HCT116 (cell line): ENCODE measurements at regions of chr7 and their contacts with region 1.

Region 1: GRCh38 chr7:87312215-87312865 is 33.1 kb upstream of the CROT start:
- DNase-seq: peak; percentile 29
- ATAC-seq: peak; percentile 86
- H3K4me3 ChIP-seq: no peak overlapping the region
- H3K27ac ChIP-seq: no peak overlapping the region
- H3K4me1 ChIP-seq: no peaks in the 10 kb centered on the region
- H3K27me3 ChIP-seq: no peaks in the 10 kb centered on the region
- CTCF ChIP-seq: peak; percentile 82 to 99 (median 97)
- POLR2A ChIP-seq: no peak
- RAD21 ChIP-seq: peak; percentile 90

Region 2: DNA sequence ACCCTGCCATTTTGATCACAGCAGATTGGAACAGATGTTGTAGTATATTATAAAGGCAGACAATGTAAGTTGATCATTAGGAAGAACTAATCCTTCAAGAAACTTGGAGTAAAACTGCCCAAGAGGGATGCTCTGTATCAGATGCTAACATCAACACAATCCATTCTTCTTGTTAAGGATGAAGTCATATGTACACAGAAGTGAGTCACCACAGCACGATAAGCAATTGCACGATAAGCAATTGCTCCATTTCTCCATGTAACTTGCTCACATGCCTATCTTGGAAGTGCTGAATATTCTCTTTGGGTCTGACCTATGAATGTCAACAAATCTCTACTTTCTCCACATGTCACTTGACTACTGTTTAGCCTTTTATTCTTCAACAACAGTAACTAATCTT is 201.6 kb before region 1 on chr7:
- CTCF ChIA-PET with region 1: no interaction called
- POLR2A ChIA-PET with region 1: no interaction called
- RAD21 ChIA-PET with region 1: no interaction called
- intact Hi-C with region 1: no loop called
- DNase-seq: no peak
- ATAC-seq: no peak
- H3K4me3 ChIP-seq: no peak overlapping the region
- H3K27ac ChIP-seq: no peak overlapping the region
- H3K4me1 ChIP-seq: no peaks in the 10 kb centered on the region
- H3K27me3 ChIP-seq: no peaks in the 10 kb centered on the region
- CTCF ChIP-seq: no peak
- POLR2A ChIP-seq: no peak
- RAD21 ChIP-seq: no peak

Region 3: DNA sequence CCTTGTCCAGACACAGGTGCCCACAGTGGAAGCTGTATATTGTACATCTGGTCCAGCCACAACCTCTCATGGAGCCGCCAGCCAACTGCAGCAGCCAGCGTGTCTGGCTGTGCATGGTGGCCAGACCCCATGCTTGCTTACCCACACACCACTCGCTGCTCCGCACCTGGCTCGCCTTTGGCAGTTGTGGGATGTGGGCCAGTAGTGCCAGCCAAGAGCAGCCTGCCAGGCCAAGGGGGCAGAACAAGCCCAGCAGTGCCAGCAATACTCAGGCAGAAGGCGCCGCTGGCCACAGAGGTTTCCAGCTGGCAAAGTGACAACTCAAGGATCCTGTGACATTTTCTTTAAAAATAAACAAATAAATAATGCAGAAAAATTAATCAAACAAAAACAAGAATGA is 81.1 kb before region 1 on chr7:
- CTCF ChIA-PET with region 1: no interaction called
- POLR2A ChIA-PET with region 1: no interaction called
- RAD21 ChIA-PET with region 1: no interaction called
- intact Hi-C with region 1: no loop called
- DNase-seq: no peak
- ATAC-seq: no peak
- H3K4me3 ChIP-seq: no peak overlapping the region
- H3K27ac ChIP-seq: no peak overlapping the region
- H3K4me1 ChIP-seq: no peaks in the 10 kb centered on the region
- H3K27me3 ChIP-seq: no peaks in the 10 kb centered on the region
- CTCF ChIP-seq: no peak
- POLR2A ChIP-seq: no peak
- RAD21 ChIP-seq: no peak

Region 4: DNA sequence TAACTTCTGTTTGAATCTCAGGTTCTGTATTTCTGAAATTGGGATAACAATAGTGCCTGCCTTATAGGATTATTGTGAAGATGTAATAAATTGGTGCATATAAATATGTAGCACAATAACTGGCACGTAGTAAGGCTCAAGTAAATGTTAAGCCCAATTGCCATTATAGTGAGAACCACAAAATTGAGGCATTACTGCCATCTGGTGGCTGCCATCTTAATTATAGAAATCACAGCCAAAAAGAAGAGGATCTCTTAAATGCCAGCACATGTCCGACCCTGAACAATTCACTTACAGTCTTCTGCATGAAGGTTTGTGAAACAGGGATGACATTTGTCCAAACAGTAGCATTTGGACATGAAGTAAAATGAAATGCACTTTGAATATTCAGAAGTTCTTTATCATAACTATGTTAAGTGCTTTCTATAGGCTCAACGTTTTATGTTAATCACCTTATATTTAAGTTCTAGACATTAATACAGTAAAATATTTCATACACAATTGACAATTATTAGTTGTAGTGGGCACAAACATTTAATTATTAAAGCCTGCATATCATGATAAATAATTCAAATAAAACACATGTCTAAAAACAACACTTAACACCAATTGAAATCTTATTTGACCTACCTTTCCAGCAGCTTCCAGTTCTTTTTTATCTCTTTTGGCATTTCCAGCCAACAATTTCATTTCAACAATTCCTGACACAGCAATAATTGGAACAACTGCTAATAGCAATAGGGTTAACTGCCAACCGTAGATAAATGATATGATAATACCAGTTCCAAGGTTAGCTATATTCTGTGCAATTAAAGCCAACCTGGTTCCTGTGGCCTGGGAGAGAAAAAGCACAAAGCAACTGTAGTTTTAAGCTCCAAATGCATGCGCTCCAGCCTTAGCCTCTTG is 104.6 kb after region 1 on chr7:
- CTCF ChIA-PET with region 1: interaction called, 28 read pairs
- POLR2A ChIA-PET with region 1: no interaction called
- RAD21 ChIA-PET with region 1: interaction called, 3 to 4 read pairs
- intact Hi-C with region 1: loop called (anchors 1 kb)
- DNase-seq: peak; percentile 62
- ATAC-seq: peak; percentile 84
- H3K4me3 ChIP-seq: no peak overlapping the region
- H3K27ac ChIP-seq: no peak overlapping the region
- H3K4me1 ChIP-seq: no peaks in the 10 kb centered on the region
- H3K27me3 ChIP-seq: no peaks in the 10 kb centered on the region
- CTCF ChIP-seq: peak; percentile 52 to 75 (median 71)
- POLR2A ChIP-seq: no peak
- RAD21 ChIP-seq: peak; percentile 85

Region 5: GRCh38 chr7:87624628-87625027 is 312.3 kb after region 1 on chr7:
- CTCF ChIA-PET with region 1: no interaction called
- POLR2A ChIA-PET with region 1: no interaction called
- RAD21 ChIA-PET with region 1: no interaction called
- intact Hi-C with region 1: loop called (anchors 5 kb)
- DNase-seq: no peak
- ATAC-seq: no peak
- H3K4me3 ChIP-seq: 0 out of 4 replicates have a peak overlapping the region, but pooled peaks of 1 of the 2 experiments have one; percentile 1
- H3K27ac ChIP-seq: no peak overlapping the region
- H3K4me1 ChIP-seq: peaks cover 4 to 11% of the 10 kb centered on the region in 2 experiments; a peak in 3 of 4 replicates
- H3K27me3 ChIP-seq: no peaks in the 10 kb centered on the region
- CTCF ChIP-seq: peak; percentile 42 to 55 (median 48); a peak in 5 of 6 replicates
- POLR2A ChIP-seq: no peak
- RAD21 ChIP-seq: peak; percentile 73

Region 6: GRCh38 chr7:87886875-87887274 is 574.5 kb after region 1 on chr7:
- CTCF ChIA-PET with region 1: no interaction called
- POLR2A ChIA-PET with region 1: no interaction called
- RAD21 ChIA-PET with region 1: no interaction called
- intact Hi-C with region 1: loop called (anchors 5 kb)
- DNase-seq: peak; percentile 3
- ATAC-seq: no peak
- H3K4me3 ChIP-seq: no peak overlapping the region
- H3K27ac ChIP-seq: no peak overlapping the region
- H3K4me1 ChIP-seq: no peaks in the 10 kb centered on the region
- H3K27me3 ChIP-seq: no peaks in the 10 kb centered on the region
- CTCF ChIP-seq: peak in 2 of 3 experiments; percentile 37 to 53; a peak in 3 of 6 replicates
- POLR2A ChIP-seq: no peak
- RAD21 ChIP-seq: peak; percentile 68